ENCODE measurements at regions of chr7 and their contacts with region 1.

Region 1: DNA sequence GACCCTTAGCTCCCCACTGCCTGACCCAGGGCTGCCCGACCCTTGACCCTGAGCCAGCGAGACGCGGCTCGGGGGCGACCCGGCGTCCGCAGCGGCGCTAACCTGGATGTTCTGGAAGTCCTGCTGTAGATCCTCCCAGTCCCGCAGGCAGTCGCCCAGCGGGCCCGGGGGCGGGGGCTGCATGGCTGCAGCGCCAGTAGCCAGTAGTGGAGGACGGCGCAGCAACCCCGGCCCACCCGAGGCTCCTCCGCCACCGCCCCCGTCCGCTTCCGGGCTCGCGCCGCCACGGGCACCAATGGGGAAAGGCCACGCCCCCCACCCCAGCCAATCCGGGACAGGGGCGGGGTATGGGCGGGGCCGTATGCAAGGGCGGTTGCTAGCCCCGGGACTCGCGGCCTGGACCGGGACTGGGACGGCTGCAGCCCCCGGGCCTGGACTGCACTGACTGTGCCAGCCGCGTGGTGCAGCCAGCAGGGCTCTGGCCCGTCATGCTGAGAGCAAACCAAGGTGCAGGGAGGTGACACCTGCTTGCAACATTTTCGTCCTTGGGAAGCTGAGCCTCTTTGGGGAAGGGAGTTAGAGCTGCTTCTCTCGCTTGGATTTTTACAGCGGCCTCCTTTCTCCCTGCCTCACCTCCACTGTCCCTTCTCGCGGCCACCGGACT is at the start of gene TMEM120A:
- DNase-seq: peak; percentile 99
- ATAC-seq: peak; percentile 95
- total RNA-seq, gene TMEM120A: 109 TPM

Region 2: DNA sequence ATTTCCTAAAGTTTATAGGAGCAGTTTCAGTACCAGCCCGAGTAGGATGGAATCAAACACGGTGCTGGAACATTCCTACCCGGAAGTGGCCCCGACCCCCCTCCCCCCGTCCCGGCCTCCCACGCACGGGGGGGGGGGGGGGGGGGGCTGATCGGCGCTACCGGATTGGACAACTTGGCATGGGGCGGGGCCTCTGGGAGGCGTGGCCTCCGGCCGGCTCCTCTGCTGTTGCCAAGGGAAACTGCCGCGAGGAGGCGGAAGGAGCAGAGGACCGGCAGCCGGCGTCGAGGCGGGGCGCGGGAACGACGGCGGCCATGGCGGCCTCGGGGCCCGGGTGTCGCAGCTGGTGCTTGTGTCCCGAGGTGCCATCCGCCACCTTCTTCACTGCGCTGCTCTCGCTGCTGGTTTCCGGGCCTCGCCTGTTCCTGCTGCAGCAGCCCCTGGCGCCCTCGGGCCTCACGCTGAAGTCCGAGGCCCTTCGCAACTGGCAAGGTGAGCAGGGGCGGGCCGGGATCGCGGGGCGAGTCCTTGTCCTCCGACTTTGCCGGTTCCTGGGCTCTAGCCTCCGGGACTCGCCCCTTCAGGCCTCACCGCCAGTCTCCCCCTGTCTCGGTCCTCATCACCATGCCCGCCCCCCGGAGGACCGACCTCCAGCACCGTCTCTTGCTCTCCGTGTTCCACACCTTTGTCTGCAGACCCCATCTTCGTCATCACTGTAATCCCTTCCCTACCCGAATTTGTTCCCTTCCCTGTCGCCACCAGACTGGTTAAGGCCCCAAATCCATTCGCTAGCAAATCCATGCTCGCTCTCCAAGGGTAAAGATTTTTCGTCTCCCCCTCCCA is 115.5 kb before region 1 on chr7 and contains the start of gene RHBDD2:
- intact Hi-C with region 1: loop called (anchors 10 kb)
- DNase-seq: peak; percentile 98
- ATAC-seq: peak; percentile 98
- total RNA-seq, gene RHBDD2: 16.7 TPM

Region 3: GRCh38 chr7:75914730-75915585 is 79.6 kb before region 1 on chr7 and contains the start of gene POR:
- intact Hi-C with region 1: loop called (anchors 2 kb)
- DNase-seq: peak; percentile 98
- ATAC-seq: peak; percentile 100
- total RNA-seq, gene POR: 66.3 TPM

Region 4: GRCh38 chr7:75950111-75950756 is 44.3 kb before region 1 on chr7:
- intact Hi-C with region 1: loop called (anchors 1 kb)
- DNase-seq: no peak
- ATAC-seq: peak; percentile 58

Region 5: DNA sequence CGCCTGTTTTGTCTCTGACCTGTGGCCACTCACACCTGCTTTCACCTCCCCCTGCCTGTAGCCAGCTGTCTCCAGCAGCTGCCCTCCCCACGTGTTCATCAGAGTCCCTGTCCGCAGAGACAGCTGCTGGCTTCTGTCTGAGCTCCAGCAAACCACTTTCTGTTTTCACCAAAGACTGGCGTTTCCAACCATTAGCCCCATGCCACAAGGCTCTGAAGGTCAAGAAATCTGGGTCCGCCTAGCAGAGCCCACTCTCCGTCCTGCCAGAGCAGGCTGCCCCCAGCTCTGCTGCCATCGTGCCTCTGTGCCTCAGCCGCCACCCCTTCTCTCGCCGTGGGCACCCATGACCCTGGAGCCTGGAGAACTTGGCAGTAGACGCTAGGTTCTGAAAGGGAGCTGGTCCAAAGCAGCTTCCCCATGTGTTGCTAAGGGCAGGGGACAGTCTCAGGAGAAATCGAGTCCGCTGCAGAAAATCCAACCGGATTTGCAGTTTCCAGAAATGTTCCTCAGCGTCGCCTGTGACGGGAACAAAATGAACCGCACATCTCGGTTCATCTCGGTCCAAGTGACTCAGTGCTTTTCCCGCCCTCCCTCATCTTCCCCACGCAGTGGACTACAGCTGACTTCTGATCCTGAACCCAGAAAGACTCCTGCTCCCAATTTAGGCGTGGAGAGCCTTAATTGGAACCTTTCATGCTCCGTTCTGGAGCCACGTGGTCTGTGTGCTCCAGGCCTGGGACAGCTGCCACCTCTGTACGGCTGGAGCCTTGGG is 28.1 kb before region 1 on chr7:
- intact Hi-C with region 1: loop called (anchors 2 kb)
- DNase-seq: peak; percentile 78
- ATAC-seq: peak; percentile 88

Region 6: GRCh38 chr7:76047811-76048667 is 53.5 kb after region 1 on chr7 and contains the starts of genes MDH2 and STYXL1:
- intact Hi-C with region 1: loop called (anchors 5 kb)
- DNase-seq: peak; percentile 97
- ATAC-seq: peak; percentile 96
- total RNA-seq, gene MDH2: 688 TPM
- total RNA-seq, gene STYXL1: 21.6 TPM